ENCODE measurements at regions of chr6 and their contacts with region 1.

Region 1: DNA sequence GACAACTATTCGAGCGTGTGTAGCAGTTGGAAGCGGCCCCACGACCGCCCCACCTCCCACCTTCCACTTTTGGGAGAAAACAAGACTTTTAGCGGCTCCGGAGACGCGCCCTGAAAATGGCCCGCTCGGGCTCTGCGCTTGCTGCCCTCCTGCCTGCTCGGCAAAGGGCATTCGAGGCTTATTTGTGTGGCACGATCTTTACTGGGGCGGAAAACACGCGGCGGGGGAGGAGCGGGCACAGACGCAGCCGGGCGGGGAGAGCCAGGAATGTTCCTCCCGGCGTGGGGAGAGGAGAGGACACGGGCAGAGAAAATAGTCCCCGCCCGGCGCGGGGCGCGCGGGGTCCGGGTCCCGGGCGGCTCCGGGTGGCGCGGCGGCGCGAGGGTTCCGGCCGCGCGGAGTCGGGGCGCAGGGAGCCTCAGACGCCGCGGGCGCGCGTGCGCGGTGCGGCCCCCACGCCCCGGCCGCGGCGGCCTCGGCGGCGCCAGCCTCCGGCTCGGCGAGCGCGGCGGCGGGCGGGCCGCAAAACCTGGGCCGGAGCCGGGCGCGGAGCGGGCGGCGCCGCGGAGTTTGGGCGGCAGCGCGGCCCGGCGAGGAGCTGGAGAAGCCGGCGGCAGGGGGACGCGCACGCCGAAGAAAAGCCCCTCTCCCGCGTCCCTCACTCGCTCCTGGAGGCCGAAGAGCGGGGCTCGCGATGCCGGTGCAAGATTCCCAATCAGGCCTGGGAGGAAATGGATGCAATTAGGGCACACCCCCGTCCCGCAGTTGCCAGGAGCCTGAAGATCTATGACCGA is 90.0 kb upstream of the ARID1B start:
- DNase-seq: peak; percentile 92 to 95 (median 94)
- ATAC-seq: peak; percentile 96 to 98 (median 96)
- H3K4me3 ChIP-seq: peak overlapping the region; percentile 36 to 91 (median 76)
- H3K27ac ChIP-seq: peak overlapping the region; percentile 91 to 100 (median 98)
- H3K4me1 ChIP-seq: peaks cover 0 to 18% (median 11%) of the 10 kb centered on the region in 12 donors
- H3K27me3 ChIP-seq: no peaks in the 10 kb centered on the region
- CTCF ChIP-seq: no peak
- POLR2A ChIP-seq: peak in 1 of 2 donors; percentile 80

Region 2: GRCh38 chr6:156719720-156720563 is 32.8 kb after region 1 on chr6:
- intact Hi-C with region 1: loop called in 4 of 10 experiments (anchors 1 to 5 kb)
- DNase-seq: peak; percentile 94 to 98 (median 96)
- ATAC-seq: peak; percentile 96 to 100 (median 99)
- H3K4me3 ChIP-seq: peak overlapping the region in 10 of 12 donors; percentile 2 to 60 (median 44)
- H3K27ac ChIP-seq: peak overlapping the region; percentile 78 to 95 (median 88)
- H3K4me1 ChIP-seq: peaks cover 6 to 26% (median 21%) of the 10 kb centered on the region in 12 donors
- H3K27me3 ChIP-seq: no peaks in the 10 kb centered on the region
- CTCF ChIP-seq: peak in 1 of 12 donors; percentile 11
- POLR2A ChIP-seq: peak in 1 of 2 donors; percentile 39

Region 3: GRCh38 chr6:156866220-156867015 is 179.2 kb after region 1 on chr6:
- intact Hi-C with region 1: loop called in 1 of 10 experiments (anchors 10 kb)
- DNase-seq: peak in 3 of 5 donors; percentile 32 to 58 (median 33)
- ATAC-seq: peak; percentile 69 to 88 (median 81)
- H3K4me3 ChIP-seq: no peak overlapping the region
- H3K27ac ChIP-seq: no peak overlapping the region
- H3K4me1 ChIP-seq: peaks cover 4 to 72% (median 51%) of the 10 kb centered on the region in 12 donors
- H3K27me3 ChIP-seq: no peaks in the 10 kb centered on the region
- CTCF ChIP-seq: peak in 4 of 12 donors; percentile 6 to 34 (median 26)
- POLR2A ChIP-seq: no peak

Region 4: DNA sequence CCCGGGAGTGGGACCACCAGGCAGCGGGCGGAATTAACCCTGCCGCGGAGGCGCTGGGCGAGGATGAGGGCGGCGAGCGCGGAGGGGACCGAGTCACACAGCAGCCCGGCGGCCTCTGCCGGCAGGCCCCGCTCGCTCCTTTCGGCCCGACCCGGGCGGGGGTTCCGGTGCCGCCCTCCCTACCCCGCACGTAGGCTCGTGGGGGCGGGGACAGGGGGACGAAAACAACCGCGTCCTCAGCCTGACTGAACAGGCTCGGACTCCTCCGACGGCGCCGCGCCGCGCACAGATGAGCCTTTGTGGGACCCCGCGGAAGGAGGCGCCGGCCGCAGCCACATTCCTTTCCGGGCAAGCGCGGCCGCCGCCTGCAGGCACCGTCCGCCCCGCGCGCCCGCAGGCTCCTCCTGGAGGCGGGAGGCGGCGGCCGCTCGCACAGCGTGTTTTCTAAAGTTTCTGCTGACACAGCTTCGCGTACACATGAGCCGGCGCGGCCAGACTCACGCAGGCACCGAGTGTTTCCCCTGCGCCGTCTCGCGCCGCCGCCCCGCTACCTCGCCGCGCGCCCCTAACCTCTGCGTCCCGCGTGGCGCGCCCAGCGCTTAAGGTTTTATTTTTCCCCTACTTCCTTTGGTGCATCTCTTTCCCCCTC is 334.3 kb after region 1 on chr6:
- intact Hi-C with region 1: loop called in 8 of 10 experiments (anchors 1 to 10 kb)
- DNase-seq: peak; percentile 93 to 96 (median 93)
- ATAC-seq: peak; percentile 89 to 95 (median 94)
- H3K4me3 ChIP-seq: peak overlapping the region; percentile 53 to 96 (median 82)
- H3K27ac ChIP-seq: peak overlapping the region; percentile 95 to 100 (median 99)
- H3K4me1 ChIP-seq: peaks cover 0 to 55% (median 32%) of the 10 kb centered on the region in 12 donors
- H3K27me3 ChIP-seq: no peaks in the 10 kb centered on the region
- CTCF ChIP-seq: peak; percentile 11 to 72 (median 48)
- POLR2A ChIP-seq: peak in 1 of 2 donors; percentile 95

Region 5: GRCh38 chr6:157274471-157275226 is 587.5 kb after region 1 on chr6:
- intact Hi-C with region 1: loop called in 1 of 10 experiments (anchors 10 kb)
- DNase-seq: peak; percentile 77 to 91 (median 82)
- ATAC-seq: peak; percentile 74 to 98 (median 94)
- H3K4me3 ChIP-seq: peak overlapping the region; percentile 28 to 80 (median 64)
- H3K27ac ChIP-seq: peak overlapping the region; percentile 51 to 90 (median 81)
- H3K4me1 ChIP-seq: peaks cover 0 to 28% (median 15%) of the 10 kb centered on the region in 12 donors
- H3K27me3 ChIP-seq: no peaks in the 10 kb centered on the region
- CTCF ChIP-seq: peak; percentile 27 to 98 (median 88)
- POLR2A ChIP-seq: peak in 1 of 2 donors; percentile 40

Region 6: GRCh38 chr6:157443066-157443800 is 756.0 kb after region 1 on chr6:
- intact Hi-C with region 1: no loop called
- DNase-seq: no peak
- ATAC-seq: no peak
- H3K4me3 ChIP-seq: no peak overlapping the region
- H3K27ac ChIP-seq: no peak overlapping the region
- H3K4me1 ChIP-seq: peaks cover 0 to 26% (median 15%) of the 10 kb centered on the region in 12 donors
- H3K27me3 ChIP-seq: no peaks in the 10 kb centered on the region
- CTCF ChIP-seq: no peak
- POLR2A ChIP-seq: no peak

Measured in heart left ventricle (tissue), 16 donors.